Activated CD8-positive, alpha-beta T cell treated with anti-CD3 and anti-CD28 coated beads for 36 hours (primary cell): ENCODE measurements at regions of chr5 and their contacts with region 1.

Region 1: GRCh38 chr5:66306105-66306843 is 162.2 kb downstream of the SREK1 start:
- DNase-seq: peak; percentile 43
- ATAC-seq: peak; percentile 82
- H3K4me3 Mint-ChIP-seq: no peak overlapping the region
- H3K27ac Mint-ChIP-seq: no peak overlapping the region
- H3K4me1 Mint-ChIP-seq: no peaks in the 10 kb centered on the region
- H3K27me3 Mint-ChIP-seq: peaks cover 5% of the 10 kb centered on the region
- CTCF ChIP-seq: peak; percentile 80

Region 2: DNA sequence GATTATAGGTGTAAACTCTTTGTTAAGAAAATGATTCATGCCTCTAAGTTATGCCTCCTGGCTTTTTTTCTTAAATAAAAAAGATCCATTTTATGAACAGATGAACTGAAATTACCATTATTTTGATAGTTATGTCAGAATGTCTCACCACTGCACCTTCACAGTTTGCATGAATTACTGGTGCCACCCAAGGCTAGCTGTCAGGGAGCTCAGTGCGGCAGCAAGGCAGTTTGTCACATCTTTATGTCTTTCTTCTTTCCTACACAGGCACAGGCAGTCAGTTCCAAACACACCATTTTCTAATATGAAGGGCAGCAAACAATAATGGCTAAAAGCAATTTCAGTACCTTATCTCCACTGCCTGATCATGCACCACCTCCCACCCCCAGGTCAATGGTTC is 14.5 kb before region 1 on chr5:
- CTCF ChIA-PET with region 1: interaction called, 18 read pairs
- POLR2A ChIA-PET with region 1: no interaction called
- intact Hi-C with region 1: no loop called
- DNase-seq: no peak
- ATAC-seq: no peak
- H3K4me3 Mint-ChIP-seq: no peak overlapping the region
- H3K27ac Mint-ChIP-seq: no peak overlapping the region
- H3K4me1 Mint-ChIP-seq: no peaks in the 10 kb centered on the region
- H3K27me3 Mint-ChIP-seq: no peaks in the 10 kb centered on the region
- CTCF ChIP-seq: no peak

Region 3: GRCh38 chr5:66337626-66338226 is 31.5 kb after region 1 on chr5:
- CTCF ChIA-PET with region 1: interaction called, 27 read pairs
- POLR2A ChIA-PET with region 1: no interaction called
- intact Hi-C with region 1: no loop called
- DNase-seq: no peak
- ATAC-seq: no peak
- H3K4me3 Mint-ChIP-seq: no peak overlapping the region
- H3K27ac Mint-ChIP-seq: no peak overlapping the region
- H3K4me1 Mint-ChIP-seq: no peaks in the 10 kb centered on the region
- H3K27me3 Mint-ChIP-seq: peaks cover 18% of the 10 kb centered on the region
- CTCF ChIP-seq: no peak

Region 4: DNA sequence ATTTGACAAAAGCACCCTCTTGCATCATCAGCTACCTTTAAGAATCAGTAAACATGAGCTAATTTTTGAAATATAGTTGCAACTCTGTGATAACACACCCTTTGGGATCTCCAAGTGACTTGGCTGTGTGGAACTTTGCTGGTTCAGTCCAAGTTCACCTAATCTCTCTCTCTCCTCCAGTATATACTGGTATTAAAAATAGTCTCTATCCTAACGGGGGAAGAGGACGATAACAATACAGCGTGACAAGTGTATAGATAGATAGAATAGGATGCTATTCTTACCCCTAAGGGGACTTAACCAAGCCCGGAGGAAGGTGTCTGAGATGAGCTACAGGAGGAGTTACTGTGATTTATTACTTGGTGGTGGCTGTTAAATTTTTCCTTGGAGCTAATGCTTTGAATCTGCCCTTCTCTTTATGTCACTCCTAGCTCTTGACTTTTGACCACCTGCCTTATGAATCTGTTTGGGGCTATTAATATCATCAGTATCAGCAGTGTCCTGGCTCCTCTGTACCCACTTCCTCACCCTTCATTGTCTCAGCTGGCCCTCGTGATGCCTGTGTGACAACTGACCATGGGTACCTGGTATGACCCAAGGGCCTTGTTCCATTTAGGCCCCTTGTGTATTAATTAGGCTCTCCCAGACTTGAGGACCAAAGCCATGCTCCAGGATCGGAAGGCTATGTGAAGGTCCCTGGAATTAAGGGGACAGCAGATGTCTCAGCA is 61.7 kb after region 1 on chr5:
- CTCF ChIA-PET with region 1: interaction called, 23 read pairs
- POLR2A ChIA-PET with region 1: no interaction called
- intact Hi-C with region 1: no loop called
- DNase-seq: no peak
- ATAC-seq: no peak
- H3K4me3 Mint-ChIP-seq: no peak overlapping the region
- H3K27ac Mint-ChIP-seq: no peak overlapping the region
- H3K4me1 Mint-ChIP-seq: no peaks in the 10 kb centered on the region
- H3K27me3 Mint-ChIP-seq: peaks cover 8% of the 10 kb centered on the region
- CTCF ChIP-seq: no peak

Region 5: GRCh38 chr5:66757188-66757833 is 451.0 kb after region 1 on chr5:
- CTCF ChIA-PET with region 1: interaction called, 92 read pairs
- POLR2A ChIA-PET with region 1: no interaction called
- intact Hi-C with region 1: loop called (anchors 5 kb)
- DNase-seq: peak; percentile 62
- ATAC-seq: no peak
- H3K4me3 Mint-ChIP-seq: no peak overlapping the region
- H3K27ac Mint-ChIP-seq: no peak overlapping the region
- H3K4me1 Mint-ChIP-seq: no peaks in the 10 kb centered on the region
- H3K27me3 Mint-ChIP-seq: peaks cover 3% of the 10 kb centered on the region
- CTCF ChIP-seq: peak; percentile 51